SK-N-SH (cell line): ENCODE measurements at regions of chr19 and their contacts with region 1.

Region 1: GRCh38 chr19:15195371-15196334 is 5.1 kb downstream of the NOTCH3 start:
- DNase-seq: peak; percentile 94
- H3K4me3 ChIP-seq: peak overlapping the region; percentile 46; a peak in 3 of 4 replicates
- H3K27ac ChIP-seq: no peak overlapping the region
- H3K4me1 ChIP-seq: peaks cover 0 to 22% of the 10 kb centered on the region in 2 experiments; a peak in 1 of 4 replicates
- H3K27me3 ChIP-seq: no peaks in the 10 kb centered on the region
- CTCF ChIP-seq: no peak
- EP300 ChIP-seq: no peak
- RAD21 ChIP-seq: peak; percentile 24; the same call in 1 of the 2 replicates

Region 2: GRCh38 chr19:15091901-15092753 is 103.5 kb before region 1 on chr19:
- CTCF ChIA-PET with region 1: no interaction called
- POLR2A ChIA-PET with region 1: no interaction called
- DNase-seq: peak; percentile 50
- H3K4me3 ChIP-seq: no peak overlapping the region
- H3K27ac ChIP-seq: no peak overlapping the region
- H3K4me1 ChIP-seq: no peaks in the 10 kb centered on the region; a peak in 1 of 4 replicates
- H3K27me3 ChIP-seq: peaks cover 37% of the 10 kb centered on the region
- CTCF ChIP-seq: peak; percentile 73
- EP300 ChIP-seq: no peak
- RAD21 ChIP-seq: peak; percentile 80

Region 3: DNA sequence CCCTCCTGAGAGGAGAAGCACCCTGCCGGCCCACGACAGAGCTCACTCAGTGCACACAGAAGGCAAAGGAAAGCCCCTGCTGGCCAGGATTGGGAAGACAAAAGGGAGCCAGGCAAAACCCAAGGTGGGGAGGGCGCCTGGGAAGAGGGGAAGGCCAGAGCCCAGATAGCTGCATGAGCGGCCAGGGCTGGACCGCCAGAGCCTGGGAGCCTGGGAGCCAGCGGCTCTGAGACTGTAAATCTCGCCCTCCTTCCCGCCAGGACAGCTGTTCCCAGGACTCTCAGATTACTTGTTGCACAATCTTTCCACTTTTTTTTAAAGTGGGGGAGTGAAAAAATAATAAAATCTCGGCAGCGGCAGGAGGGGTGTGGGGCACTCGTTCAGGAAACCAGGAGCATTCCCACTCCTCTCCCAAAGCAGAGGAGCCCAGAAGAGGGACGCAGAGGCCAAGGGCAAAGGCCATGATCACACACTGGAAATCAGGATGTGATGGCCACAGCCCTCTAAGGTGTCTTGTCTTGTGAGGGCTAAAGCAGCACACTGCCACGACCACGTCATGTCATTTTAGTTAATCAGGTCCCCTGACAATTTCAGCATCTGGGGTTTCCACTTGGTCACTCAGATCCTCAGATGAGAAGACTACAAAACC is 56.2 kb after region 1 on chr19:
- CTCF ChIA-PET with region 1: interaction called, 11 read pairs
- POLR2A ChIA-PET with region 1: no interaction called
- DNase-seq: peak; percentile 77
- H3K4me3 ChIP-seq: 0 out of 4 replicates have a peak overlapping the region, but pooled peaks of 1 of the 2 experiments have one; percentile 4
- H3K27ac ChIP-seq: peak overlapping the region; percentile 43 to 97
- H3K4me1 ChIP-seq: peaks cover 17 to 47% of the 10 kb centered on the region in 2 experiments
- H3K27me3 ChIP-seq: no peaks in the 10 kb centered on the region
- CTCF ChIP-seq: peak; percentile 60
- EP300 ChIP-seq: no peak
- RAD21 ChIP-seq: peak; percentile 43